ENCODE measurements at regions of chr3 and their contacts with region 1.

Region 1: DNA sequence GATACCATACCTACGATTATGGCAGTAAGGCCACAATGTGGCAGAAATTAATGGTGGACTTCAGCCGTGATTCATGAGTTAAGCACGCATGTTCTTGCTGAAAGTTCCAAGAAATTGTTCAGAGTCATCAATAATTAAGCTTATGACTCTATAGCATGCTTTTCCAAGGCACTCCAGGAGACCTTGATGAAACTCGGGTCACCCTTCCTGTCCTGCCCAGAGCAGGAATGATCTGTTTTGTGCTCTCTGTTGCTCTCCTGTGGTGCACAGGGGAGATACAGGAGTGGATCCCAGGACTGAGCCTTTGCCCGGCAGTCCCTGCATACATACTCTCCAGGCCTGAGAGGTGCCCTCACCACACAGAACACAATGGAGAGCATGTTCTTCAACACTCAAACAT is 141.6 kb upstream of the SLC2A2 start:
- DNase-seq: no peak
- H3K4me3 ChIP-seq: no peak overlapping the region
- CTCF ChIP-seq: peak; percentile 68

Region 2: GRCh38 chr3:171049861-171050444 is 118.1 kb before region 1 on chr3:
- CTCF ChIA-PET with region 1: interaction called, 58 read pairs
- POLR2A ChIA-PET with region 1: no interaction called
- DNase-seq: no peak
- H3K4me3 ChIP-seq: no peak overlapping the region
- CTCF ChIP-seq: peak; percentile 66

Region 3: DNA sequence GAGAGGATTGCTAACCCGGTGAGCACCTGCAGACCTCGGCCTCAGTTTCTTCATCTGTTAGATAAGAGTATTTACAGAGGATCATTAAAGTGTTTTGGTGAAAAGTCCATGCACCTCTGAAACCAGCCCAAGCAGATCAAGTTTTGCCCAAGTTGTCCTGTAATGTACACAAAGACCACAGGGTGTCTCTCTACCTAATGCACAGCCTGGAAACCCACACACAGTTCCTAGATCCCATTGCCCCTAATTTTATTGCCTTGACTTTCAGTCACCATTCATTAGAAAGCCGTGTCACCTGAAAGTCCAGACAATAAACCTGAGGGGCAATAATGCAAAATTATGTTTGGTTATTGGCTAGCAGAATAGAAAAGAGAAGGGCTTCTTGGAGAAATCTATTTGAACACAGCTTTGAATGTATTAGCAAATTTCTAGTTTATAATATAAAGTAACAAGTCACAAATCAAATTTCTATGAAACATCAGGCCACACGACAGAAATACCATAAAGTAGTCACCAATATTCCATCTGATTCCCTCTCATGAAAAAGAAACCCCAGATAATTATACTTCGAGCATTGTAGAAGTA is 19.7 kb after region 1 on chr3:
- CTCF ChIA-PET with region 1: interaction called, 12 read pairs
- POLR2A ChIA-PET with region 1: no interaction called
- DNase-seq: no peak
- H3K4me3 ChIP-seq: no peak overlapping the region
- CTCF ChIP-seq: peak; percentile 59